Activated B cell treated with CpG ODN at 0.5 μM for 24 hours (primary cell): ENCODE measurements at regions of chr22 and their contacts with region 1.

Region 1: GRCh38 chr22:37229805-37230672 is 14.0 kb downstream of the RAC2 start:
- DNase-seq: peak; percentile 70
- ATAC-seq: peak; percentile 82
- H3K4me3 Mint-ChIP-seq: peak overlapping the region; percentile 72
- H3K27ac Mint-ChIP-seq: peak overlapping the region; percentile 99
- H3K4me1 Mint-ChIP-seq: peaks cover 91% of the 10 kb centered on the region
- H3K27me3 Mint-ChIP-seq: no peaks in the 10 kb centered on the region
- CTCF ChIP-seq: no peak

Region 2: DNA sequence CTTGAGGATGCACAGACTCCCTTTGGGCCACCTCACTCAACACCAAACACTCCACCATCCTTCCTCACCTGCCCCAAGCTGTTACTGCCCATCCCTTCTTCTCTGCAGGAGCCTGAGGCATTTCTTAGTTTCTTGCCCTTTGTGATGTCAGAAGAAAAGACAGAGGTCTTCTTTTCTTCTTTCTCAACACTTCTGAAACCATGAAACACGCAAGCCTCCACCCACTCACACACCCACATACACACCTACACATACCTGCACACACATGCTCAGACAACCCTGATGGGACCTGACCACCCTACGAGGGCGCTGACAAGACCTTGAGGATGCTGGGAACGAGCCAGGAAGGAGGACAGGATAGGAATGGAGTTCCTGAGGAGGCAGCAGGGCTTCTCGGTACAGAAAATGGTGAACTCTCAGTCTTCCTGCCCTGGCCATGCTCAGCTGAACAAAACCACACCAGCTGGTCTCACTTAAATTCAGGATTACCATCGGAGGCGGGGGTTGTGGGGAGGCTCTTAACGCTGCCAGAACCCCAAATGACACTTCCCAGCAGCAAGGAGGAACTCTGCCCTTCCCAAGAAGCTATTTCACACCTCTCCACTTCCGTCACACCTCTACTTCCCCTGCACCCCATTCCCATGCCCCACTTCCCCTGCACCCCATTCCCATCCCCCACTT is 275.7 kb before region 1 on chr22:
- CTCF ChIA-PET with region 1: no interaction called
- POLR2A ChIA-PET with region 1: no interaction called
- intact Hi-C with region 1: no loop called
- DNase-seq: no peak
- ATAC-seq: no peak
- H3K4me3 Mint-ChIP-seq: no peak overlapping the region
- H3K27ac Mint-ChIP-seq: no peak overlapping the region
- H3K4me1 Mint-ChIP-seq: peaks cover 6% of the 10 kb centered on the region
- H3K27me3 Mint-ChIP-seq: peaks cover 25% of the 10 kb centered on the region
- CTCF ChIP-seq: no peak

Region 3: DNA sequence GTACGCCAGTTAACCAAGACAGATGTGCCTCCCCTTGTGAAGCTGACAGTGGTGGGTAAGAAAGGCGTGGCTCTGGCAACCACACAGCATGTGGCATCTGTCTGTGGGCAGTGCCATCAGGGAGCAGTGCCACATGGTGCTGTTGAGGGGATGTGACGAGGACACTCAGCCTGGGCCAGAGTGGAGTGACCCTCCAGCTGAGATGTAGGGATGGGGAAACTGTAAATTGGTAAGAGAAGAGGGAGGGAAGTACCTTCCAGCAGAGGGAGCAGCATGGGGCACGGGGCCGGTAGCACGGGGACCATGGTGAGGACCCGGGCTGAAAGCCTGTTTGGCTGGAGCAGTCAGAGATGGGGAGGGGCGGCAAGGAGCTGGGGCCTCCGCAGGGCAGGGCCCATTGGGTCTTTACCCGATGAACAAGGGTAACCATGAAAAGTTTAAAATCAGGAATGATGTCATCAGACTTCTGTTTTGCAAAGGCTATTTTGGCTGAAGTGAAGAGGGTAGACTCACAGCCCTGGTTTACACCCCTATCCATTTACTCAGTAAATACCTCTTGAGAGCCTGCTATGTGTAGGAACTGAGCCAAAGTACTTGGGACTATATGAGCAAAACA is 131.0 kb before region 1 on chr22:
- CTCF ChIA-PET with region 1: no interaction called
- POLR2A ChIA-PET with region 1: no interaction called
- intact Hi-C with region 1: no loop called
- DNase-seq: no peak
- ATAC-seq: peak; percentile 53
- H3K4me3 Mint-ChIP-seq: no peak overlapping the region
- H3K27ac Mint-ChIP-seq: no peak overlapping the region
- H3K4me1 Mint-ChIP-seq: peaks cover 14% of the 10 kb centered on the region
- H3K27me3 Mint-ChIP-seq: peaks cover 29% of the 10 kb centered on the region
- CTCF ChIP-seq: no peak

Region 4: DNA sequence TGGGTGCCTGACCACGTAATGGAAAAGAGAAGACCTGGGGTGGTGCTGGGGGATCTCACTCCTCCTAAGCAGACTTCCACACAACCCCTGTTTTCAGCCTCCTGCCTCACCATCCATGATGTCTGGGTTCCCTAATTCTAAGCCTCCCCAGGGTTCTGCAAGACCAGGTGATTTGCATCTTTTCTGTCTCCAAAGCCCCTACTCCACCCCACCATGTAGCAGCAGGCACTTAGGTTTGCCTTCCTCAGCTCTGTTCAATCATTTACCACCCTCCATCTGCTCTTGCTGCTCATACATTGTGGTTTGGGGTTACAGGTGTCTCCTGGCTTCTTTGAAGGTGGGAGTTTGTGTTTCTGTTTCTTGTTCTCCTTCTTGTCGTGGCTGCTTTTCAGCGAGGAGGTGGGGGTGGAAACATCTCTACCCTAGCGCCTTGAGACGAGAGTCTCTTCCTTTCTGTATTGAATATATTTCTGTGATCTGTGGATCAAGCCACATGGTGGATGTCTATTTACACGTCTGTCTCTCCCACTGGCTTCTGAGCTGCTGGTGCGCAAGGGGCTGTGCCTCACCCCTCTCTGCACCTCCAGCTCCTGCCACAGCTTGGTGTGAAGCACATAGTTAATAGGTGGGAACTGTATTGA is 11.1 kb before region 1 on chr22:
- CTCF ChIA-PET with region 1: interaction called, 5 read pairs
- POLR2A ChIA-PET with region 1: interaction called, 32 read pairs
- intact Hi-C with region 1: loop called (anchors 1 kb)
- DNase-seq: no peak
- ATAC-seq: peak; percentile 83
- H3K4me3 Mint-ChIP-seq: peak overlapping the region; percentile 71
- H3K27ac Mint-ChIP-seq: peak overlapping the region; percentile 99
- H3K4me1 Mint-ChIP-seq: peaks cover 78% of the 10 kb centered on the region
- H3K27me3 Mint-ChIP-seq: no peaks in the 10 kb centered on the region
- CTCF ChIP-seq: no peak

Region 5: DNA sequence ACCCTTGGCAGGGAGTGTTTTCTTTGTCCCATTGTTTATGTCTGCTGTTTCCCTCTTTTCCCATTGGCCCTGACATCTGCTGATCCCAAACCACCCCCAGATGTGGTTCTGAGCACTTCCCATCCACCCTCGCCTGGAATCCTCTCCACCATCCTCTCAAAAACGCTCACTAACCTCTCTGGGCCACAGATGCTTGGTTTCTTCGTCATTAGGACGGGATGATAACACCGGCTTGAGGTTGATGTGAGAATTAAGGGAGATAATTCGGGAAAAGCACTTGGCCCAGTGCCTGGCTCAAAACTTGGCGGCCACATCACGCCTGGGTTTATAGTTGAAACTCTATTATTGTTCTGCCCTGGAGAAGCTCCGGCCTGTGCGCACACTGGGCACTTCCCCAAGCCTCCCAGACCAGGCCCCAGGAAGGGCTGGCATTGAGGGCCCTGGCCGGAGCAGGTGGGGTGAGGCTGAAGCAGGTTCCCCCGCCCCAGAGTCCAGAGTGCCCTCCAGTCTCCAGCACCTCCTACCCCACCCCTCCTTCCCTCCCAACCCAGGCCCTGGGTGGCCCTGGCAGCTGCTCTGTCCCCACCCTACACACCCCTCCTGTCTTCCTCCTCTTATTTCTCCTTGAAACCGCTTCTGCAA is 115.9 kb after region 1 on chr22:
- CTCF ChIA-PET with region 1: no interaction called
- POLR2A ChIA-PET with region 1: no interaction called
- intact Hi-C with region 1: no loop called
- DNase-seq: no peak
- ATAC-seq: no peak
- H3K4me3 Mint-ChIP-seq: no peak overlapping the region
- H3K27ac Mint-ChIP-seq: no peak overlapping the region
- H3K4me1 Mint-ChIP-seq: no peaks in the 10 kb centered on the region
- H3K27me3 Mint-ChIP-seq: peaks cover 18% of the 10 kb centered on the region
- CTCF ChIP-seq: no peak